ENCODE measurements at regions of chr5 and their contacts with region 1.

Region 1: DNA sequence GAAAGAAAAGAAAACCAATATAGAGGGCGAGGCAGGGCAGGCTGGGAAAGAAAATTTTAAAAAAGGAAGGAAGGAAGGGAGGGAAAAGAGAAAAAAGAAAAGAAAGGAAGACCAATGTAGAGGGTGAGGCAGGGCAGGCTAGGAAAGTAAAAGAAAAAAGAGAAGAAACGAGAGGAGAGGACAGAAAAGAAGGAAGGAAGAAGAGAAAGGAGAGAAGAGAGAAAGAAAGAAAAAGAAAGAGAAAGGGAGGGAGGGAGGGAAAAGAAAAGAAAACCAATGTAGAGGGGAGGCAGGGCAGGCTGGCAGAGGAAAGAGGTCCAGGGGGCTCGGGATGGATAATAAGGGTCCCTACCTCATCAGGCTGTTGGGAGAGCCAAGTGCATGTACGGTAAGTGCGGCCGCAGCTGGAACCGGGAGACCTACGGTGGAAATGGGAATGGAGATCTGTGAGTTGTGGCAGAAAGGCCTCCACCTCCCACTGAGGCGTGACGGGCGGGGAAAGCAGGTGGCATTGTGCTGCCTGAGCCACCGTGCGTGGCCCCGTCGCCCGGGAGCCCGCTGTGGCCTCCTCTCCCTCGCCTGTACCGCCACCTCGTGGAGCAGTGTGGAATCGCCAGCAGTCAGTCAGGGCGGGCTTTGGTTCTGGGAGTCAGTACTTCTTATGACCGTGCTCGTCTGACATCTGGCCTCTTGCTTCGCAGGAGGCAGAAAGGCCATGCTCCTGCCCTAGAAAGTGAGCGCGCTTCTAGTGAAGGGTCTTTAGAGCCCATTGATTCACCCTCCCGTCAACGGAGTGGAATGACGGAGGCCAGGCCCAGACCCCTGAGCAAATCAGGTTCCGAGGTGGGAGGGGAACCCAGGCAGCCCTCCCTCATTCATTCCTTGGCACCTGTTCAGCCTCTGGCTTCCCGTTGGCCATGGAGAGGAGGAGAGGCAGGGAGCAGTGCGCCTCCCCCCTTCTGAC is 10.4 kb upstream of the NHP2 start:
- DNase-seq: peak; percentile 70 to 89 (median 85)
- H3K4me3 ChIP-seq: no peak overlapping the region
- H3K27ac ChIP-seq: no peak overlapping the region
- H3K4me1 ChIP-seq: peaks cover 2% of the 10 kb centered on the region
- H3K27me3 ChIP-seq: no peaks in the 10 kb centered on the region
- CTCF ChIP-seq: peak; percentile 92 to 93 (median 92)
- EP300 ChIP-seq: no peak
- POLR2A ChIP-seq: no peak

Region 2: DNA sequence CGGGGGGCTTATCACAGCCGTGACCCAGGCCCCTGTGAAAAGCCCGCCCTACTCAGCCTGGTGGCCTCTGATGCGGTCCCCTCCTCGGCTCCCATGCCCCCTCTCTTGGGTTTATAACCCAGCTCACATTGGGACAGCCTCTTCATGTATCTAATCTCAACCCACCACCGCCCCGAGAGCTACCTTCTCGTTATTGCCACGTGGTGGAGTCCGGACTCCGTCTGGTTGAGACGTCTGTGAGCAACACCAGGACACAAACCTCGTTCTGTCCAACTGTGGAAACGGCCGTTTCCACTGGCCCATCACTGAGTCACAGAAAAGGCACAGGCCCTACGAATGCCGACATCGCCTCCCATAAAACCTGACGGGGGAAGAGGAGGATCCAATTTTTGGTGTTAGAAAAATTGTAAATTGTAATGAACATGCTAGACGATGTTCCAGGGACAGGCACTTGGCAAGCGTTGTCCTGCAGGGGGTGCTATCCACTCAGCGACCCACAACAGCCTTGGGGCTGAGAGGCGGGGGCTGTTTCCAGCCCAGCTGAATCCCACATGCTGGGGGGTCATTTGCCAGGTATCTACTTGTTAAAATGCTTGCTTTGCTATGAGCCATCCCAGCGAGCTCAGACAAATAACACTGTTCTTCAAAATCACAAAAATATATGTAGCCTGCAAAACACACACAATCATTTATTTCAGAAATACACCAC is 88.1 kb before region 1 on chr5:
- intact Hi-C with region 1: loop called (anchors 2 to 5 kb)
- DNase-seq: peak; percentile 47 to 76 (median 62)
- H3K4me3 ChIP-seq: no peak overlapping the region
- H3K27ac ChIP-seq: no peak overlapping the region
- H3K4me1 ChIP-seq: no peaks in the 10 kb centered on the region
- H3K27me3 ChIP-seq: no peaks in the 10 kb centered on the region
- CTCF ChIP-seq: peak; percentile 15 to 61 (median 48)
- EP300 ChIP-seq: no peak
- POLR2A ChIP-seq: no peak

Measured in ovary (tissue), 10 donors.